IMR-90 (cell line): ENCODE measurements at regions of chr5 and their contacts with region 1.

Region 1: GRCh38 chr5:54905943-54906537 is 79.4 kb downstream of the ESM1 start:
- DNase-seq: peak; percentile 82
- ATAC-seq: peak; percentile 53
- H3K4me3 ChIP-seq: no peak overlapping the region
- H3K27ac ChIP-seq: no peak overlapping the region
- H3K4me1 ChIP-seq: peaks cover 25% of the 10 kb centered on the region
- H3K27me3 ChIP-seq: no peaks in the 10 kb centered on the region
- CTCF ChIP-seq: peak; percentile 87
- POLR2A ChIP-seq: no peak
- RAD21 ChIP-seq: peak; percentile 84

Region 2: DNA sequence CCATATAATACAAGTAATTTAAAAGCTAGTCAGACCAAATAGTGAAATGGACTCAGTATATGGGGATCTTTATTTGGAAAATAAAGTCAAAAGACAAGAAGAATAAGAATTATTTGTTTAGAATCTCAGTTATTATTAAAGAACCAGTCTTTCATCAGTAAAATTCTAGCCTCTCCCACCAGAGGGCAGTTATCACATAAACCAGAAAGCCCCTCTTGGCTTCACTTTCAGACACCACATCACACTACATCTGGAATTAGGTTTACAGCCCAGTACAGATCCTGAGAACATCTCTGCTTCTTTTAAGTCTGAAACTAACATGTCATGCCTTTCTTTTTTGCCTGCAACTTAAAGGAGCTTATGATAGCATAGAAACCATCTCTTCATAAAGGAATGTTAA is 462.8 kb before region 1 on chr5:
- CTCF ChIA-PET with region 1: no interaction called
- POLR2A ChIA-PET with region 1: no interaction called
- dilution Hi-C with region 1: no loop called
- in situ Hi-C with region 1: no loop called
- intact Hi-C with region 1: loop called (anchors 5 kb)
- DNase-seq: peak; percentile 63
- ATAC-seq: peak; percentile 67
- H3K4me3 ChIP-seq: no peak overlapping the region
- H3K27ac ChIP-seq: no peak overlapping the region
- H3K4me1 ChIP-seq: no peaks in the 10 kb centered on the region
- H3K27me3 ChIP-seq: peaks cover 15% of the 10 kb centered on the region
- CTCF ChIP-seq: peak; percentile 69
- POLR2A ChIP-seq: no peak
- RAD21 ChIP-seq: peak; percentile 73

Region 3: GRCh38 chr5:54944364-54944763 is 38.3 kb after region 1 on chr5:
- CTCF ChIA-PET with region 1: interaction called, 6 read pairs
- POLR2A ChIA-PET with region 1: no interaction called
- dilution Hi-C with region 1: no loop called
- in situ Hi-C with region 1: no loop called
- intact Hi-C with region 1: loop called (anchors 1 kb)
- DNase-seq: peak; percentile 58
- ATAC-seq: peak; percentile 64
- H3K4me3 ChIP-seq: no peak overlapping the region
- H3K27ac ChIP-seq: no peak overlapping the region
- H3K4me1 ChIP-seq: no peaks in the 10 kb centered on the region
- H3K27me3 ChIP-seq: peaks cover 33% of the 10 kb centered on the region
- CTCF ChIP-seq: peak; percentile 76
- POLR2A ChIP-seq: no peak
- RAD21 ChIP-seq: peak; percentile 71

Region 4: GRCh38 chr5:55004729-55005128 is 98.7 kb after region 1 on chr5:
- CTCF ChIA-PET with region 1: no interaction called
- POLR2A ChIA-PET with region 1: no interaction called
- dilution Hi-C with region 1: no loop called
- in situ Hi-C with region 1: no loop called
- intact Hi-C with region 1: no loop called
- DNase-seq: peak; percentile 65
- ATAC-seq: peak; percentile 61
- H3K4me3 ChIP-seq: no peak overlapping the region
- H3K27ac ChIP-seq: no peak overlapping the region
- H3K4me1 ChIP-seq: peaks cover 4% of the 10 kb centered on the region
- H3K27me3 ChIP-seq: no peaks in the 10 kb centered on the region; the same call in 1 of the 2 replicates
- CTCF ChIP-seq: no peak
- POLR2A ChIP-seq: no peak
- RAD21 ChIP-seq: no peak

Region 5: DNA sequence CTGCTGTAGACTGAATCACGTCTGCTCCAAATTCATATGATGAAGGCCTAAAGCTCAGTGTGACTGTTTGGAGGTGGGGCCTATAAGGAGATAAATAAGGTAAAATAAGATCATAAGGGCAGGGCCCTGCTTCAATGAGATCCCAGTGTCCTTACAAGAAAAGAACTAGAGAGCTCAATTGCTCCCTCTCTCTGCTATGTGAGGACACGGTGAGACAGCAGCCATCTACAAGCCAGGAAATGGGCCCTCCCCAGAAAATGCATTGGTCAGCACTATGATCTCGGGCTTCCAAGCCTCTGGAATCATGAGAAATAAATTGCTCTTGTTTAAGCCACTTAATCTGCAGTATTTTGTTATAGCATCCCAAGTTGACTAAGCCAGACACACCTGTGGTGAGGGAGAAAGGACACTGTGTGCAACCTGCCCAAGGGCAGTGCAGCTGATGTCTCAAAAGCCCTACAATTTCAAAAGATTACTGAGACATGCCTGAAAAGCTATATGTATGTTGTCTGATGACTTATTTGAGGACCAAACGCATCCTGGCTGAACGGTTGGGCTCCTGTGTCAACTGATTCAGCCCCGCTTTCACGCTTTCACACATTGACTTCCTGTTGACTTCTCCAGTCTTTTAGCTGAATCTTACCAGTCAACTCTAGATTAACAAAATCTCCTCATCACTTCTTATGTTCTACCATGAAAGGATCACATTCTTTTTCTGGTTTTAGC is 131.2 kb after region 1 on chr5:
- CTCF ChIA-PET with region 1: no interaction called
- POLR2A ChIA-PET with region 1: no interaction called
- dilution Hi-C with region 1: no loop called
- in situ Hi-C with region 1: no loop called
- intact Hi-C with region 1: loop called (anchors 10 kb)
- DNase-seq: no peak
- ATAC-seq: peak; percentile 53; the same call in 1 of the 2 replicates
- H3K4me3 ChIP-seq: no peak overlapping the region
- H3K27ac ChIP-seq: no peak overlapping the region
- H3K4me1 ChIP-seq: no peaks in the 10 kb centered on the region
- H3K27me3 ChIP-seq: peaks cover 6% of the 10 kb centered on the region
- CTCF ChIP-seq: peak; percentile 24; the same call in 1 of the 2 replicates
- POLR2A ChIP-seq: no peak
- RAD21 ChIP-seq: no peak

Region 6: DNA sequence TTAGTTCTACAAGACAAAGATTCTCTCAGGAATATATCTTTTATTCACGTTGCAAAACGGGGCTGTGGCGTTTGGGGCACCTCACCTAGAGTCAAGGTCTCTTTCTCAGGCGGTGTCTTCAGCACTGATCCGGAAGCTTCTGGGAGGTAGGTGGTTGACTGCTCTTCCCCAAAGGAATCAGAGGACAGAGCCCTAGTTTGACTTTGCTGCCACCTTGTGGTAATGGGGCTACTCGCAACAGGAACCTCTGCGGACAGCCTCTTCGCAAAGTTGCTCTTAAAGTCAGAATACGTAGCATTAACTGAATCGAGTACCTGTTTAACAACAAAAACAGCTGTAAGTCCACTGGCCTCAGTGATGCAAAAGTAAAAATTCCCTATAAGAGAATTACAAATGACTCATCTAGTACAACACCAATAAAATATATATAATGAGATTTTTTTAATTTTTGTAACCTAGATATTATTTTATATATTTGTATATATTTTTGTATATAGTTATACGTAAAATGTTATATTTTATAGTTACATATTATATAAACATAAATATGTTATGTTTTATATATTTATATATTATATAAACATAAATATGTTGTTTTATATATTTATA is 240.6 kb after region 1 on chr5:
- CTCF ChIA-PET with region 1: interaction called, 14 read pairs
- POLR2A ChIA-PET with region 1: no interaction called
- dilution Hi-C with region 1: no loop called
- in situ Hi-C with region 1: no loop called
- intact Hi-C with region 1: loop called (anchors 1 kb)
- DNase-seq: peak; percentile 82
- ATAC-seq: peak; percentile 97
- H3K4me3 ChIP-seq: no peak overlapping the region
- H3K27ac ChIP-seq: no peak overlapping the region
- H3K4me1 ChIP-seq: no peaks in the 10 kb centered on the region
- H3K27me3 ChIP-seq: peaks cover 11% of the 10 kb centered on the region
- CTCF ChIP-seq: peak; percentile 98
- POLR2A ChIP-seq: peak; percentile 56; the same call in 1 of the 2 replicates
- RAD21 ChIP-seq: peak; percentile 99

Region 7: GRCh38 chr5:55159763-55160492 is 253.9 kb after region 1 on chr5 and contains the start of gene GPX8:
- CTCF ChIA-PET with region 1: interaction called, 15 read pairs
- POLR2A ChIA-PET with region 1: interaction called, 9 read pairs
- dilution Hi-C with region 1: no loop called
- in situ Hi-C with region 1: loop called (anchors 5 kb)
- intact Hi-C with region 1: loop called (anchors 1 kb)
- DNase-seq: peak; percentile 92
- ATAC-seq: peak; percentile 88
- H3K4me3 ChIP-seq: peak within 1 kb of the TSS; percentile 66
- H3K27ac ChIP-seq: peak within 1 kb of the TSS; percentile 76
- H3K4me1 ChIP-seq: peaks cover 4% of the 10 kb centered on the region
- H3K27me3 ChIP-seq: no peaks in the 10 kb centered on the region
- CTCF ChIP-seq: peak; percentile 75
- POLR2A ChIP-seq: peak; percentile 77
- RAD21 ChIP-seq: peak; percentile 86
- total RNA-seq, gene GPX8: 166 and 201 TPM in 2 replicates

Region 8: DNA sequence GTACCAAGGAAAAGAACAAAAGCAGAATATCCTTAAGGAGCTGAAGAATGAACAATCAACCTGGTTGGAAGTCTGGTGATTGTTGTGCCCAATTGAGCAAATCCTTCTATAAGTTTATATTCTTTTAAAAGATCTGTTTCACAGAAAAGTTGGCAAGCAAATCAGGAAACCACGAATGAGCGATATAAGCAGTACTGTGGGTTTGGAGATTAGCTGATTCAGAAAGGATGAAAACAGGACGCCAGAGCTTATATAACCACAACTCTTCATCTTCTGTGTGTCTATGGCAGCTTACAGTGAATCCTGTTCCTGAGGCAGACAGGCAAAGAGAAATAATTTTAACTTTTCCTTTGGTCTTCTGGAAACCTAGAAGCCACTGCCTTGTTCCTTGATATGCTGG is 744.3 kb after region 1 on chr5:
- CTCF ChIA-PET with region 1: no interaction called
- POLR2A ChIA-PET with region 1: no interaction called
- dilution Hi-C with region 1: no loop called
- in situ Hi-C with region 1: no loop called
- intact Hi-C with region 1: no loop called
- DNase-seq: peak; percentile 84
- ATAC-seq: peak; percentile 73
- H3K4me3 ChIP-seq: no peak overlapping the region
- H3K27ac ChIP-seq: no peak overlapping the region
- H3K4me1 ChIP-seq: peaks cover 5% of the 10 kb centered on the region; the same call in 1 of the 2 replicates
- H3K27me3 ChIP-seq: no peaks in the 10 kb centered on the region
- CTCF ChIP-seq: no peak
- POLR2A ChIP-seq: no peak
- RAD21 ChIP-seq: no peak